ENCODE measurements at regions of chrX and their contacts with region 1.

Region 1: GRCh38 chrX:154827194-154828015 is 7.1 kb downstream of the SMIM9 start:
- DNase-seq: peak; percentile 53
- ATAC-seq: peak; percentile 93
- H3K4me3 ChIP-seq: peak overlapping the region; percentile 5; the same call in 1 of the 2 replicates
- H3K27ac ChIP-seq: peak overlapping the region; percentile 71
- H3K4me1 ChIP-seq: peaks cover 17% of the 10 kb centered on the region
- H3K27me3 ChIP-seq: no peaks in the 10 kb centered on the region
- CTCF ChIP-seq: no peak
- EP300 ChIP-seq: no peak
- POLR2A ChIP-seq: peak; percentile 52
- RAD21 ChIP-seq: no peak

Region 2: DNA sequence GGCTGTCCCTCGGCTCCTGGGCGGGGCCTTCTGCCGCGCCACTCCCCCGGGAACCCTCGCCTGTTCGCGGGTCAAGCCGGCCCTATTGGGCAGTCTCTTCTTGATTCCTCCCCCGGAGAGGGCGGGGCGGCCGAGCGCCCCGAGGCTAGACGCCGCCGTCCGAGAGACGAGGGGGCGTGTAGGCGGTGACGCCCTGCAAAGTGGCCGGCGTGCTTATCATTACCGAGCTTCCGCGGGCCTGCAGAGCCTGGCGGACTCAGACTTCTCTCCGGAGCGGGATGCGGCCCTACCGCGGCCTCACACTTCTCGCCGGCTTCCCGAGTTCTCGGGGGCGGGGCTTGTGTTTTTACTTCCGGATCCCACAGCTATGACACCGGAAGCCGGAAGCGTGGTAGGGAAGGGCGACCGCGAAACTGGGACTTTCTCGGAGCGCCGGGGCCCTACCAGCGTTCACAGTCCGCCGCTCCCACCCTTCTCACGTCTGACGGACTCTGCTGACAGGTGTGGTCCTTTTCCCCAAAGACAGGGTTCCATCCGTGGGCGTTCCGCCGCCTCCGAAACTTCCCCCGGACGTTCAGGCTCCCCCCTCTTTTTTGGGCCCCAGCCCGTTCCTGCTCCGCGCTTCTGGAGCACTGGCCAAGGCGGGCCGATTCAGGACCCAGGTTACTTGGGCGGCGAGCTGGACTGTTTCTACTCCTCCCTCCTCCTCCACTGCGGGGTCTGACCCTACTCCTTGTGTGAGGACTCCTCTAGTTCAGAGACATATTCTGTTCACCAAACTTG is 280.0 kb before region 1 on chrX and contains the start of gene IKBKG:
- CTCF ChIA-PET with region 1: no interaction called
- POLR2A ChIA-PET with region 1: no interaction called
- RAD21 ChIA-PET with region 1: no interaction called
- SMC1A ChIA-PET with region 1: no interaction called
- in situ Hi-C with region 1: loop called (anchors 10 kb)
- intact Hi-C with region 1: no loop called
- DNase-seq: peak; percentile 57
- ATAC-seq: peak; percentile 89
- H3K4me3 ChIP-seq: peak within 1 kb of the TSS; percentile 72
- H3K27ac ChIP-seq: peak within 1 kb of the TSS; percentile 65
- H3K4me1 ChIP-seq: peaks cover 14% of the 10 kb centered on the region
- H3K27me3 ChIP-seq: no peaks in the 10 kb centered on the region
- CTCF ChIP-seq: no peak
- EP300 ChIP-seq: no peak
- POLR2A ChIP-seq: peak; percentile 67
- RAD21 ChIP-seq: no peak
- polyA plus RNA-seq, gene IKBKG: 0.35 to 1.5 TPM

Region 3: DNA sequence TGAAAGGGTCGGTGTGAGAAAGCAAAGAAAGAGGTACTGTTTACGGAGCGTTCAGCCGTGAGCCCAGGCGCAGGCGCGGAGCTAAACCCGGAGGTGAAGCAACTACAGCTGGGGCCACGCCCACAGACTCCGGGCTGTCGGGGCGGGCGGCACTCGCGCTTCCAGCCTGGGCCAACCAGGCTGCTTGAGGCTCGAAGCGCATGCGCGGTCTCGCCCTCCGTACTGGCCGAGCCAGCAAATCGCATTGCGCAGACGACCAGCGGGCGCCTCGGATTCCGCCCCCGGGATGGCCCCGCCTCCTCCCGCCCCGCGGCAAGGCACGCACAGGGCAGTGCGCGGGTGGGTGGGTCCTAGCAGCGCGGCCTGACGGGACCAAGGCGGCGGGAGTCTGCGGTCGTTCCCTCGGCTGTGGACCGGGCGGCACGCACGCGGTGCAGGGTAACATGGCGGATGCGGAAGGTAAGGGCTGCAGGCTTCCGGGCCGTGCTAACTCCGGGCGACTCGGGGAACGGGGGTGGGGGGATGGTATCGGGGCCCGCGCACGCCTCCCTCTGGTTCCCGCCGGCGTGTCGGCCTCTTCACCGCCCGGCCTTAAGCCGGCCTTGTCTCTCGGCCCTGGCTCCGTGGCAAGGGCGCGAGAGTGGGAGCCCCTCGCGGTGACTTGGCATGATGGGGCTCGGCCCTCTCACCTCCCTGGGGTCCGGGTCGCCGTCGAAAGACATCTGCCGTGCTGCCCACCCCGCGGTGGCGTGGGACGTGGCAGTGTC is 64.7 kb before region 1 on chrX and contains the start of gene DKC1:
- CTCF ChIA-PET with region 1: no interaction called
- POLR2A ChIA-PET with region 1: interaction called, 4 read pairs
- RAD21 ChIA-PET with region 1: interaction called, 4 read pairs
- SMC1A ChIA-PET with region 1: interaction called, 4 read pairs
- in situ Hi-C with region 1: no loop called
- intact Hi-C with region 1: loop called (anchors 2 kb)
- DNase-seq: peak; percentile 82
- ATAC-seq: peak; percentile 91
- H3K4me3 ChIP-seq: peak within 1 kb of the TSS; percentile 73
- H3K27ac ChIP-seq: peak within 1 kb of the TSS; percentile 76
- H3K4me1 ChIP-seq: no peaks in the 10 kb centered on the region
- H3K27me3 ChIP-seq: no peaks in the 10 kb centered on the region
- CTCF ChIP-seq: peak in 2 of 3 experiments; percentile 5 to 7; a peak in 1 of 6 replicates
- EP300 ChIP-seq: no peak
- POLR2A ChIP-seq: peak; percentile 90
- RAD21 ChIP-seq: no peak
- polyA plus RNA-seq, gene DKC1: 106 to 159 TPM

Region 4: DNA sequence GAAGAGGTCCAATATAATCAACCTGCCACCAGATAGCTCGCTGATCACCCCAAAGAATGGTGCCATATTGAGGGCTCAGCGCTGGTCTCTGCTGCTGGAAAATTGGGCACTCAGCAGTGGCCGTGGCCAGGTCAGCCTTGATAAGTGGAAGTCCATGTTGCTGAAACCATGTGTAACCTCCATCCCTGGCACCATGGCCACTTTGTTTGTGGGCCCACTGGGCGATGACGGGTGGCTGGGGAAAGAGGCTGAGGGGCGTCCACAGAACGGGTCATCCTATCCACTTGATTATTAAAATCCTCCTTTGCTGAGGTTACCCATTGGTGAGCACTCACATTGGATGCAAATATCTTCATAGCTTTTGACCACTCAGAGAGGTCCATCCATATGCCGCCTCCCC is 562.2 kb after region 1 on chrX:
- CTCF ChIA-PET with region 1: no interaction called
- POLR2A ChIA-PET with region 1: no interaction called
- RAD21 ChIA-PET with region 1: no interaction called
- SMC1A ChIA-PET with region 1: no interaction called
- in situ Hi-C with region 1: no loop called
- intact Hi-C with region 1: no loop called
- DNase-seq: no peak
- ATAC-seq: no peak
- H3K4me3 ChIP-seq: no peak overlapping the region
- H3K27ac ChIP-seq: no peak overlapping the region
- H3K4me1 ChIP-seq: no peaks in the 10 kb centered on the region
- H3K27me3 ChIP-seq: no peaks in the 10 kb centered on the region
- CTCF ChIP-seq: no peak
- EP300 ChIP-seq: no peak
- POLR2A ChIP-seq: no peak
- RAD21 ChIP-seq: no peak